Activated CD4-positive, alpha-beta T cell treated with anti-CD3 and anti-CD28 coated beads for 36 hours (primary cell): ENCODE measurements at regions of chr1 and their contacts with region 1.

Region 1: DNA sequence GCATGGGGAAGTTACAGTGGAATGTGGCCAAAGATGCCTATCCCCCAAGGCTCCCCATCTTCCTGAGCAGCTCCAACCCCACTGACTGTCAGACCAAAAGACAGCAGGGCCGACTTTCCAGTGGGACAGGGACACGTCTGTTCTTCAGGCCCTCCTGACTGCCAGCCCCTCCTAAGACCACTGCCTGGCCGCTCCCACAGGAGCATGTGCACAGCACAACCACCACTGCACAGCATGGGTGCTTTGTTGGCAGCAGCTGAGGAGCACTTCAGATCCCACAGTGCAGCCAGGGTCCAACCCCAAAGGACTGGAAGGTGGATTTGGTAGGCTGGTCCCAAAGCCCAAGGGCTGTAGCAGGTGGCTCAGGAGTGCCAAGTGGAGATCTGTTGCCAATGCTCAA is 648.3 kb upstream of the BRINP3 start:
- DNase-seq: no peak
- ATAC-seq: no peak
- H3K4me3 Mint-ChIP-seq: no peak overlapping the region
- H3K27ac Mint-ChIP-seq: no peak overlapping the region
- H3K4me1 Mint-ChIP-seq: no peaks in the 10 kb centered on the region
- H3K27me3 Mint-ChIP-seq: no peaks in the 10 kb centered on the region

Region 2: GRCh38 chr1:191163631-191164030 is 37.7 kb after region 1 on chr1:
- CTCF ChIA-PET with region 1: no interaction called
- POLR2A ChIA-PET with region 1: no interaction called
- intact Hi-C with region 1: loop called in 1 of 2 experiments (anchors 1 kb)
- DNase-seq: no peak
- ATAC-seq: no peak
- H3K4me3 Mint-ChIP-seq: no peak overlapping the region
- H3K27ac Mint-ChIP-seq: no peak overlapping the region
- H3K4me1 Mint-ChIP-seq: no peaks in the 10 kb centered on the region
- H3K27me3 Mint-ChIP-seq: no peaks in the 10 kb centered on the region

Region 3: DNA sequence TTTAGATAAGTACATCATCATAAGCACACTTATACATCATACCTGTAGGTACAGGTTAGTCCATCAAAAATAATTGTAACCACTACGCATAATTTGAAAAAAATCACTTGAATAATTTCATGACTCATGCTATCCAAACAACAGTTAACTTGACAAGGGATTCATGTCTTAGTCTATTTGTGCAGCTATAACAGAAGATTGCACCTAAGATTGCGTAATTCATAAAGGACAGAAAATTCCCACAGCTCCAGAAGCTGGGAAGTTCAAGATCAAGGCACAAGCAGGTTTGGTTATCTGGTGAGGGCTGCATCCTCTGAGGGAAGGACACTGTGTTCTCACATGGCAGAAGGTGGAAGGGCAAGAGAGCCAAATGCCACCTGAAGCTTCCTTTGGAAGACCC is 153.4 kb after region 1 on chr1:
- CTCF ChIA-PET with region 1: no interaction called
- POLR2A ChIA-PET with region 1: no interaction called
- intact Hi-C with region 1: no loop called
- DNase-seq: no peak
- ATAC-seq: no peak
- H3K4me3 Mint-ChIP-seq: no peak overlapping the region
- H3K27ac Mint-ChIP-seq: no peak overlapping the region
- H3K4me1 Mint-ChIP-seq: no peaks in the 10 kb centered on the region
- H3K27me3 Mint-ChIP-seq: no peaks in the 10 kb centered on the region